Activated CD4-positive, alpha-beta memory T cell treated with anti-CD3 and anti-CD28 coated beads for 36 hours (primary cell): ENCODE measurements at regions of chr6 and their contacts with region 1.

Region 1: DNA sequence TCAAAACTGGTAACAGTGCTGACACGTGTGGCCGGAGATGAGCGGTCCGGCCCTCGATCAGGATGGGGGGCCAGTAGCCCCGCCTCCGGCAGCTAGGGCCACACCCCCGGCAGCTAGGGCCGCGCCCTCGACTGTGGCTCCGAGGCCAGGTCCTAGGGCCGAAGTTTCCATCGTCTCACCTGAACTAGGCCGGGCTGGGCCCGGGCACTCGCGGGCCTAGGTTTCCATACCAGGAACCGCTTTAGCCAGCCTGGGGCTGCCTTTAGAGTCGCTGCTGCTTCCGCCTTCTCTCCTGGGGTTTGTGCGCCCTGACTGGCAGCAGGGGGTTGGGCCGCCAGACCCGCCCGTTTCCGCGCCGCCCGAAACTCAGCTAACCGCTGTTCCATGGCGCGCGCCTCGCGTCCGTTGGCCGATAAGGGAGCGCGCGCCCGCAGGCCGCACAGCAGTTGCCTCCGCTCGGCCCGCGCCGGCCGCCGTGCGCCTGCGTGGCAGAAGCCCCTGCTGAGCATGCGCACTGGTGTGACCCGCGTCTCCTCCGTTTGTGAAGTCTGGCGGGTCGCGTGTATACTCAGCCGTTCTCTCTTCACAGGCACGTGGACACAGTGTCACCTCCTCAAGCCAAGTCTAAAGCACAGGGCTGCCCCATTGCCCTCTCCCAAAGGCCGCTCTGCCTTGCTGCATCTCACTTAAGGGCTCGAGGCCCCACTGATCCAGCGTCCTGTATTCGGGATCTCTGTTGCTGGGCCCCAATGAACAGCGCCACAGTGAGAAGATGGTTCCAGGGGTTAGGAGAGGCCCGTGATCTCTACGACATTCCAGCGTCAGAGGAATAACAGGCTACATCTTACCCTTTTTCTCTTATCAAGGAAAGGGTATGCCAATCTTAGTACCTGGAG is at the start of gene SAYSD1:
- DNase-seq: peak; percentile 95
- H3K4me3 Mint-ChIP-seq: peak within 1 kb of the TSS; percentile 95
- H3K27ac Mint-ChIP-seq: peak within 1 kb of the TSS; percentile 96
- H3K4me1 Mint-ChIP-seq: peaks cover 56% of the 10 kb centered on the region
- H3K27me3 Mint-ChIP-seq: no peaks in the 10 kb centered on the region
- total RNA-seq, gene SAYSD1: 12.3 to 12.9 TPM

Region 2: GRCh38 chr6:38702558-38703397 is 412.2 kb before region 1 on chr6 and contains the start of gene GLO1:
- CTCF ChIA-PET with region 1: no interaction called
- POLR2A ChIA-PET with region 1: no interaction called
- intact Hi-C with region 1: loop called (anchors 2 kb)
- DNase-seq: peak; percentile 98
- H3K4me3 Mint-ChIP-seq: peak within 1 kb of the TSS; percentile 82
- H3K27ac Mint-ChIP-seq: peak within 1 kb of the TSS; percentile 79
- H3K4me1 Mint-ChIP-seq: peaks cover 37% of the 10 kb centered on the region
- H3K27me3 Mint-ChIP-seq: peaks cover 9% of the 10 kb centered on the region
- total RNA-seq, gene GLO1: 132 to 133 TPM

Region 3: GRCh38 chr6:39088331-39088730 is 26.6 kb before region 1 on chr6:
- CTCF ChIA-PET with region 1: interaction called, 5 read pairs
- POLR2A ChIA-PET with region 1: interaction called, 3 read pairs
- intact Hi-C with region 1: loop called (anchors 1 kb)
- DNase-seq: peak; percentile 40
- H3K4me3 Mint-ChIP-seq: no peak overlapping the region
- H3K27ac Mint-ChIP-seq: no peak overlapping the region
- H3K4me1 Mint-ChIP-seq: peaks cover 21% of the 10 kb centered on the region
- H3K27me3 Mint-ChIP-seq: peaks cover 51% of the 10 kb centered on the region

Region 4: DNA sequence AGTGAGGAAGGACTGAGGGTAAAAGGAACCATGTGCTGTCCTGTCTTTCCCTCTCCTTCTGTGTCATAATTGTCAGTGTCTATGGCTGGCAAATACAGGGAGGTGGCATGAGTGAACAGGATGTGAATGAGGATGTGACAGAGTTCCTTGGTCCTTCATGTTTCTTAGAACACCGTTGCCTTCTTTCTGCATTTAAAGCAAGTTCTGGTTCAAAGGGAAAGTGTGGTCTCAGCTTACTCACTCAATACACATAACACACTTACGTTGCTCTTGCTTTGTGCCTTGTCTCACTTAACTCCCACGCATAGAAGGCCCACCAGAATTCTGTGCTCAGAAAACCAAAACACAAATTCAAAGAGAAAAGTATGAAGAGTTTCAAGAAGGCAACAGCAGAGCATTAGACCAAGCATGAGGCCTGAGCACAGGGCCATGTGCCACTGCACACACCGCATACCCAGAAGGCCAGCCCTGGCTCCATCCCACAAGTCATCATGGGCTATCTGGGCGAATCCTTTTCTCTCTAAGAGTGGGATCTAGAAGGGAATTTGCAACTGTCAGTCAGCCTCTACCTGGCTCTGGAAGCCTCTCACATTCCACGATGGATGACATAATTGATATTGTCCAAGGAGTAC is 38.9 kb after region 1 on chr6:
- CTCF ChIA-PET with region 1: no interaction called
- POLR2A ChIA-PET with region 1: interaction called, 4 read pairs
- intact Hi-C with region 1: loop called (anchors 1 kb)
- DNase-seq: peak; percentile 60
- H3K4me3 Mint-ChIP-seq: no peak overlapping the region
- H3K27ac Mint-ChIP-seq: peak overlapping the region; percentile 75
- H3K4me1 Mint-ChIP-seq: peaks cover 25% of the 10 kb centered on the region
- H3K27me3 Mint-ChIP-seq: peaks cover 23% of the 10 kb centered on the region

Region 5: GRCh38 chr6:39166189-39166911 is 51.4 kb after region 1 on chr6:
- CTCF ChIA-PET with region 1: no interaction called
- POLR2A ChIA-PET with region 1: no interaction called
- intact Hi-C with region 1: no loop called
- DNase-seq: peak; percentile 90
- H3K4me3 Mint-ChIP-seq: no peak overlapping the region
- H3K27ac Mint-ChIP-seq: no peak overlapping the region
- H3K4me1 Mint-ChIP-seq: peaks cover 4% of the 10 kb centered on the region
- H3K27me3 Mint-ChIP-seq: no peaks in the 10 kb centered on the region